Left ventricle myocardium inferior (tissue), 1 donor: ENCODE measurements at regions of chr12 and their contacts with region 1.

Region 1: DNA sequence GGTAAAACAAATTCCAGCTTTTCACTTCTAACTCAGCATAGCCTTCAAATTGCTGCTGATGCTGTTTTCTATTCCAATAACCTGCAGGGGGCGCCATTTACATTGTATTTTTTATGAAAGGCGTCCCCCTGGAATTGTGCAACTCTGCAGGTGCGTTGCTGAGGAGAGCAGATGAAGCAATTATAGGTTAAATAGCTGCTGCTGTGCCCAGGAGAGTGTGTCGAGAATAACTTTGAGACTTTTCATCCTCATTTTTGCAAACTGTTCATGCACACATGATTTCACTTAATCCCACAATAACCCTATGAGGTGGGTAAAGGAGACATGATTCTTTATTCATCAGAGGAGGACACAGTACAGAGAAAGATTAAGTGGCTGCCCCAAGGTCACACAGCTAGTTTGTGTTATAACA is 75.7 kb downstream of the MYRFL start:
- DNase-seq: peak; percentile 41
- H3K4me3 ChIP-seq: no peak overlapping the region
- H3K27ac ChIP-seq: no peak overlapping the region
- H3K4me1 ChIP-seq: peaks cover 16% of the 10 kb centered on the region
- H3K27me3 ChIP-seq: no peaks in the 10 kb centered on the region
- CTCF ChIP-seq: peak; percentile 86

Region 2: GRCh38 chr12:70353780-70354660 is 453.3 kb after region 1 on chr12:
- intact Hi-C with region 1: loop called (anchors 10 kb)
- DNase-seq: no peak
- H3K4me3 ChIP-seq: no peak overlapping the region
- H3K27ac ChIP-seq: no peak overlapping the region
- H3K4me1 ChIP-seq: no peaks in the 10 kb centered on the region
- H3K27me3 ChIP-seq: no peaks in the 10 kb centered on the region
- CTCF ChIP-seq: no peak

Region 3: DNA sequence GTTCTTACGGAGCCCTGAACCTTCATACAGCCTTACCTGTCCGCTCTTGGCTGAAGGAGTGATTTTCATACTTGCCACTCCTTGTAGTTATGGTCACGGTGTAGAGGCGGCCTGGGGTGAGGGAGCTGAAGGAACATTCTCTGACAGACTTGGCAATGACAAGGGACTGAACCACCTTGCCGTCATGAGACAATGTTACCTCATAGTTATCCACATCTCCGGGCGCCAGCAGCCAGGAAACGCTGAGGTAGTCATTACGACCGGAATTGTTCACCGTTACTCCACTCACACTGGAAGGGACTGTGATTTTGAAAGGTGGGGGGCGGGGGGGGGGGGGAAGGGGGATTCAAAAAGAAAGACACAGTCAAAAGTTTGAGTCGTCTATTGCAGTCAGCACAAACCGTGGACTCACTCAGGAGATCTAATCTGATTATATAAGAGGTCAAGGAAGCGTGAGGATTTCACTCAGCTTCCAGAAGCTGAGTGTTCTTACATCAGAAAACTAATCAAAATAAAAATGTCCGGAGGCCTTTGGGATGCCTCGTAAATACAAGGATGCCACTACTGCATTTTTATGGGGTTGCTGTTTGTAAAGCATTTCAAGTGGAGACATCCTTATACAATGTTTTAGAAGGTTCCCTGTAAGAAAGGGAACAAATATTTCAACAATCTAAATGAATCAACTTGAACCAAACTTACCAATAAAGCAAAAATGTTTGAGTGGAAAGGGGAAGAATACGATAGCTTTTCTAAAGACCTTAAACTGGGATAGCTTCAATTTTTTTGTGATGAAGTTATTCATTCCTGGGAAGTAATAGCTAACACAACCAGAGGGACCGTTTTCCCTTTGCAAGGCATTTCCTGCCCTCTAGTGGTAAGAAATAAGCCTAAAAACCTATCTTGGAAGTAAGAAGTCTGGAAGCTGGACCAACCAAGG is 675.9 kb after region 1 on chr12:
- intact Hi-C with region 1: loop called (anchors 2 kb)
- DNase-seq: no peak
- H3K4me3 ChIP-seq: no peak overlapping the region
- H3K27ac ChIP-seq: peak overlapping the region; percentile 30
- H3K4me1 ChIP-seq: peaks cover 10% of the 10 kb centered on the region
- H3K27me3 ChIP-seq: no peaks in the 10 kb centered on the region
- CTCF ChIP-seq: peak; percentile 84

Region 4: GRCh38 chr12:71164568-71165197 is 1264.0 kb after region 1 on chr12:
- intact Hi-C with region 1: no loop called
- DNase-seq: no peak
- H3K4me3 ChIP-seq: no peak overlapping the region
- H3K27ac ChIP-seq: no peak overlapping the region
- H3K4me1 ChIP-seq: no peaks in the 10 kb centered on the region
- H3K27me3 ChIP-seq: no peaks in the 10 kb centered on the region
- CTCF ChIP-seq: no peak